PC-9 (cell line): ENCODE measurements at regions of chr20 and their contacts with region 1.

Region 1: GRCh38 chr20:1631309-1632151 is 11.7 kb upstream of the SIRPB1 start:
- DNase-seq: peak; percentile 49 to 84
- H3K4me3 ChIP-seq: peak overlapping the region; percentile 19; the same call in 1 of the 2 replicates
- H3K27ac ChIP-seq: peak overlapping the region; percentile 57
- H3K4me1 ChIP-seq: peaks cover 47% of the 10 kb centered on the region
- H3K27me3 ChIP-seq: no peaks in the 10 kb centered on the region
- CTCF ChIP-seq: no peak

Region 2: DNA sequence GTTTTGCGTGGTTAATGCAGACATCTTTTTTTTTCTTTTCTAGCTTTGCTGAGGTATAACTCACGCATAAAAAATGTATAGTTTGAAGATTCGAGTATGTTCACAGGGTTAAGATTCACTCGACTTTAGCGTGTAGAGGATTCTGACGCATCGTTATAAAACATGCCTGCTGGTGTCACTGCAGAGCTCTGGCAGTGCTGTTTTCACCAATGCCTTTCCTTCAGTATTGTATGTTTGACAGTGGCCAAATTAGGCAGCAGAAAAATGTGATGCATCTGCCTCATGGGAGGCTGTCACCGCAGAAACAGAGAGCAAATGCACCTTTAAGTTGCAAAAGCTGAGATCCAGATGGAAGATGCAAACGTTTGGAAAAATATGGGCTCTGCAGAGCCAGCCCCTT is 122.3 kb before region 1 on chr20:
- CTCF ChIA-PET with region 1: interaction called, 7 read pairs
- POLR2A ChIA-PET with region 1: no interaction called
- intact Hi-C with region 1: loop called (anchors 5 kb)
- DNase-seq: no peak
- H3K4me3 ChIP-seq: no peak overlapping the region
- H3K27ac ChIP-seq: no peak overlapping the region
- H3K4me1 ChIP-seq: peaks cover 23% of the 10 kb centered on the region
- H3K27me3 ChIP-seq: no peaks in the 10 kb centered on the region
- CTCF ChIP-seq: no peak

Region 3: DNA sequence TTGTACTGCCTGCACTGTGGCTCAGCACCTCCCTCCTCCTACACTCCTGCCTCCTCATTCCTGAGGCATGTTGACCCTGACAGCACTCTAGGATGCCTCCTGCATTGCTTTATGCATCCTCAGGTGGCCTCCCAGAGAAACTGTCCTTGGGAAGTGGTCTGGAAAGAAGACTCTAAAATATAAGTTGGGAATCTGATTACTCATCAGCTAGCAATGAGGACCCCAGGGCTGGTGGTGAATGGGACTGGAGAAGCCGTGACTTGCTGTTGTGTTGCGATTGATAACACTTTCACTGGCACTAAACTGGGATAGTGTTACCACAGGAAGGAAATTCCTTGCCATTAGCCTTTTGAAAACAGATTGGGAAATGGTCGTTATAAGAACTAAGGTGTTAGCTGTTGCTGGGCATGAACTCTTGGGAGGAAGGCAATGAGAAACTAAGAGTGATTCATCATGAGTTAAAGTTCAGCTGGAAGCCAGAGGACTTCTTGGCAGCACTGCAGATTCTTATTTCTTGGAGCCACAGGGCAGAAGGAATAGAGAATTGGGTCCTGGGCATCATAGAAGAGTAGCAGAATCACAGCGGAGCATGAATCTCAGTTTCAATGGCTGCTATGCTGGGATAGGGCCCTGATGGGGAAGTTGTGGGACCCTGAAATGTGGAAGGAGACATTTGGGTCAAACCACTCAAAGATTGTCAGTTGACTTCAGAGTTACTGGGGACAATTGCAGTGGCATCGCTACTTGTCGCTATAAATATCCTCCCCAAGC is 64.0 kb before region 1 on chr20:
- CTCF ChIA-PET with region 1: no interaction called
- POLR2A ChIA-PET with region 1: interaction called, 6 read pairs
- intact Hi-C with region 1: loop called (anchors 1 kb)
- DNase-seq: peak; percentile 76 to 97
- H3K4me3 ChIP-seq: no peak overlapping the region
- H3K27ac ChIP-seq: peak overlapping the region; percentile 99
- H3K4me1 ChIP-seq: peaks cover 67% of the 10 kb centered on the region
- H3K27me3 ChIP-seq: no peaks in the 10 kb centered on the region
- CTCF ChIP-seq: no peak